ENCODE measurements at regions of chr4 and their contacts with region 1.

Region 1: DNA sequence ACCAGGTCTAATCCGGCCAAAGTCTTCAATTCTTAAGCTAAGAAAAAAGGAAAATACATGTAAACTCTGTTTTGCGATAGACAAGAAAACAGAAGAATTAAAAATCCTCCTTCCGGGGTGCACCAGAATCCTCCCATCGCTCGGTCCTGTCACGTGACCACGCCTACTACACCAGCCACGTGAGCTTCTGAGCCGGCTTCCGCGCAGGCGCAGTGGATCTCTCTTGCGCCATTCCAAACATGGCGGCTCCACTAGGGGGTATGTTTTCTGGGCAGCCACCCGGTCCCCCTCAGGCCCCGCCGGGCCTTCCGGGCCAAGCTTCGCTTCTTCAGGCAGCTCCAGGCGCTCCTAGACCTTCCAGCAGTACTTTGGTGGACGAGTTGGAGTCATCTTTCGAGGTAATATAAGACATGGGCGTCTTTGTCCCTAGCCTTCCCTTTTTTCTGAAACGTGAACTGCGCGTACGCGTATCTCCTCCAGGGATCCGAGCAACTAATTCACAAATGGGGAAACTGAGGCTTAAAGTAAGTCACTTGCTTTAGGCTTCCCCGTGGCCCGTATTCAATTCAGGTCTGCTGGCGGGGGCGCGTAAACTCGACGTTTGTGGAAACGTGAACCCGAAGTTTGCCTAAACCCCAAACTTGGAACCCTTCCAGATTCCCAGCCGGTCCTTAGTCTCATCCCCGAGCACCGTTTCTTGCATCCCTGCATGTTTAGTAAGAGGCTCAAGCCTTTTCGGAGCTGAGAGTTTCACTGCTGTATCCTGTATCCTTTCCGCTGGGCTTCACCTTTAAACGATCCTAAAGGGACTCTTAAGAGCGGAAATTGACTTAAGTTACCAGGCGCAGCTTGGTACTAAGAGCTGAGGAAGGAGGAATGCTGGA is at the start of gene MED28:
- DNase-seq: peak; percentile 88 to 98
- H3K4me3 ChIP-seq: peak within 1 kb of the TSS; percentile 80 to 91
- H3K27ac ChIP-seq: peak within 1 kb of the TSS; percentile 80 to 81
- H3K4me1 ChIP-seq: peaks cover 4 to 21% of the 10 kb centered on the region in 2 donors
- H3K27me3 ChIP-seq: no peaks in the 10 kb centered on the region
- CTCF ChIP-seq: peak in 1 of 3 experiments; percentile 21
- total RNA-seq, gene MED28: 6.2 TPM

Region 2: GRCh38 chr4:17597517-17597916 is 17.1 kb before region 1 on chr4:
- intact Hi-C with region 1: no loop called
- DNase-seq: no peak
- H3K4me3 ChIP-seq: no peak overlapping the region
- H3K27ac ChIP-seq: no peak overlapping the region
- H3K4me1 ChIP-seq: no peaks in the 10 kb centered on the region
- H3K27me3 ChIP-seq: no peaks in the 10 kb centered on the region
- CTCF ChIP-seq: no peak

Region 3: DNA sequence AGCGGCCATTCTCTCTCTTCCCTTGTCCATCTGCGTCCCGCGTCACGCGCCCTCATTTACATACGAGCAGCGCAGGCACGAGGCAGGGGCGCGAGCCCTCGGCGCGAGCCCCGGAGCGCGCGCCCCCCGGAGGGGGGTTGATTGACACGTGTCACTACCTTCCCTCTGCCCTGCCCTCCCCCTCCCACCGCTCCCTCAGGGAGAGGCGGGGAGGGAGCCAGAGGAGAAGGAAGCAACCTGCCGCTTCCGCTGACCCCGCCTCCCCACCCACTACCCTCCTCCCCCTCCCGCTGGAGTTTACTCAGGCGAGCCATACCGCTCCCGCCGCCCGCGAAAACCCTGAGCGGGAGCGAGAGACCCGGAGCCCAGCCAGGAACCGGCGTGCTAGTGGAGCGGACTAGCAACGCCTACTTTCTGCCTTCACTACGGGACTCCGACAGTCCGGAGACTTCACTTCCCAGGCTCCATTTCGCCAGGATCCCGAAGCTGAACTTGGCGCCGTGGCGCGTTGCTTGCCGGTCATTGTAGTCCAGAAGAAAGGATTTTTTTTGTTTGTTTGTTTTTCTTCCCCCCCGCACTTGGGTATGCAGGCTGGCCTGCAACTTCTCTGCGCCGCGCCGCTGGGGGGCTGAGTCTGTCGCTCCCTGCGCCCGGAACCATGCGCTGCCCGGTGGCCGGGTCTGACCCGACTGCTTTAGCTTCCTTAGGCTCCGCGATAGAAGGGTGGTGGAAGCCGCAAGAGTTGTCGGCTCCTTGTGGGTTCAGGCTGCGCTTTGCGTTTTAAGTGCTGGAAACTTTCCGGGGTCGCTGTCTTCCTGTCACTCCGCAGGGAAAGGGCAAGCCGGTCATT is 407.3 kb after region 1 on chr4 and contains the start of gene LCORL:
- intact Hi-C with region 1: loop called (anchors 2 kb)
- DNase-seq: peak; percentile 77 to 97
- H3K4me3 ChIP-seq: peak within 1 kb of the TSS; percentile 89 to 100
- H3K27ac ChIP-seq: peak within 1 kb of the TSS; percentile 83 to 91
- H3K4me1 ChIP-seq: peaks cover 2 to 3% of the 10 kb centered on the region in 2 donors
- H3K27me3 ChIP-seq: no peaks in the 10 kb centered on the region
- CTCF ChIP-seq: no peak
- total RNA-seq, gene LCORL: 1.4 TPM